ENCODE measurements at regions of chr11 and their contacts with region 1.

Region 1: GRCh38 chr11:26319906-26320305 is 12.0 kb upstream of the ANO3 start:
- ATAC-seq: peak in 7 of 8 experiments; percentile 61 to 95 (median 80)
- H3K4me3 ChIP-seq: no peak overlapping the region
- H3K27ac ChIP-seq: peak overlapping the region in 1 of 2 donors; percentile 6
- H3K4me1 ChIP-seq: peaks cover 6% of the 10 kb centered on the region in 2 donors

Region 2: DNA sequence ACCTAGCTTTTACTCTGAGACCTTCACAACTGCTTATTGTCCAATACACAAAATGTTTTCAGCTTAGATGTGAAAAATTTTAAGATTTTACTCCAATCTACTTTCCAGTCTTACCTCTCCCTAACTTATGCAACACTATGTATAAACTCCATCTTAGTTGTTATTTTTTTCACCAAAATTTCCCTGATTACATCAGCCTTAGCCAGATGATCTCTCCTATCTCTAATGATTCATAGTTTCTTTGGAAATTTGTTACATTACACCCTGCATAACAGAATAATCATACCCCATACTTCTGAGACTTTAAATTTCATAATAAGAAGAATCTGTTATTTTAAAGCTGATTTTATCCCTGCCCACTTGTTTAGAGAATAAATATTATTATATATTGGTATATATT is 608.9 kb before region 1 on chr11:
- in situ Hi-C with region 1: no loop called
- ATAC-seq: no peak
- H3K4me3 ChIP-seq: no peak overlapping the region
- H3K27ac ChIP-seq: no peak overlapping the region
- H3K4me1 ChIP-seq: no peaks in the 10 kb centered on the region

Region 3: DNA sequence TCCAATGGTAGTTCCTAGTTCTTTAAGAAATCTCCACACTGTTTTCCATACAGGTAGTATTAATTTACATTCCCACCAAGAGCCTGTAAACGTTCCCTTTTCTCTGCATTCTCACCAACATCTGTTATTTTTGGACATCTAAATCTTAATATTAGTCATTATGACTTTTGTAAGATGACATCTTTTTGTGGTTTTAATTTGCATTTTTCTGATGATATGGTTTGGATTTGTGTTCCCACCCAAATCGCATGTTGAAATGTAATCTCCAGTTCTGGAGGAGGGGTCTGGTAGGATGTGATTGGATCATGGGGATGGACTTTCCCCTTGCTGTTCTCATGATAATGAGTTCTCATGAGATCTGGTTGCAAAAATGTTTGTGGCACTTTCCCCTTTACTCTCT is 163.2 kb after region 1 on chr11:
- in situ Hi-C with region 1: no loop called
- ATAC-seq: peak in 2 of 8 experiments; percentile 84 to 85
- H3K4me3 ChIP-seq: no peak overlapping the region
- H3K27ac ChIP-seq: no peak overlapping the region
- H3K4me1 ChIP-seq: no peaks in the 10 kb centered on the region

Region 4: DNA sequence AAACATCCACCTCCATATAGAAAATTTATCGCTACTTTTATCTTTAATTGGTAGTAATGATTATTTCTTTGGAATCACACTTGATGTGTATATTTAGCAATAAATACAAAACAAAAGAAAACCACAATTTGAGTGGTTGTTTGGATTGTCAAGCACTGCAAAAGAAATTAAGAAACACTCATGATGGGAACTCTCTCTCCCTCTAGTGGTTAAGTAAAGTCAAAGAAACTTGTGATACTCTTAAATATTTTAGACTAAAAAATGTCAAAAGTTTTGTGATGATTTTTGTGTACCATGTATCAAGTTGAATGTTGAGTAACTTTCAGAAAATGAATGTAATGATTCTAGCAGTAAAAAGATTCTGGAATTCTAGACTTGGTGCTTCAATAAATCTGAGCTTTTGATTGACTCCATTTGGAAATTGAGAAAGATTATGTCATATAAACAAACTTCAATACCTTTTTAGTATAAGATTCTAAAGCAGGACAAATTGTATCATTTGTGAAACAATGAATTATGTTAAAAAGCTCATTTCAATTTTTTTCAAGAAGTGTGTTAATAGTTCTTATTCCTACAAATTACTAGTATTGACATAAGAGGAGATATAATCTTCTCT is 231.4 kb after region 1 on chr11:
- in situ Hi-C with region 1: loop called in 1 of 9 experiments (anchors 10 kb)
- ATAC-seq: peak in 1 of 8 experiments; percentile 23
- H3K4me3 ChIP-seq: no peak overlapping the region
- H3K27ac ChIP-seq: no peak overlapping the region
- H3K4me1 ChIP-seq: no peaks in the 10 kb centered on the region

Region 5: DNA sequence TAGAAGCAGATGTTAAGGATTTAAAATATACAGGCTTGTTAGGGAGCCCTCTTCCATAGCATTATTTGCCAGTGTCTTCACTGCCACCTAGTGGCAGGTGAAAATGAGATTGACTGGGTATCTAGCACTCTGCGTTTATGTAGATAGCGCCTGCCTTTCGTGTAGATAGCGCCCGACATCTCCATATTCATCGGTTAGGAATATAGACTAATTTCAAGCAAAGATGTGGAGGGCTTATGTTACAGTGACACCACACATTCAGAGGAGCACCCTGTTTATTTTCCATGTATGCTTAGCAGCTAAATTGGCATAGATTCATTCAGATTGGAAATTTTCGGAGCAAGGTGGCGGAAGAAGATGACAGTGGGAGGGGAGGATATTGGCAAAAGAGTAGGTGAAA is 330.0 kb after region 1 on chr11:
- in situ Hi-C with region 1: loop called in 1 of 9 experiments (anchors 25 kb)
- ATAC-seq: peak; percentile 72 to 100 (median 86)
- H3K4me3 ChIP-seq: no peak overlapping the region
- H3K27ac ChIP-seq: no peak overlapping the region
- H3K4me1 ChIP-seq: no peaks in the 10 kb centered on the region

Region 6: DNA sequence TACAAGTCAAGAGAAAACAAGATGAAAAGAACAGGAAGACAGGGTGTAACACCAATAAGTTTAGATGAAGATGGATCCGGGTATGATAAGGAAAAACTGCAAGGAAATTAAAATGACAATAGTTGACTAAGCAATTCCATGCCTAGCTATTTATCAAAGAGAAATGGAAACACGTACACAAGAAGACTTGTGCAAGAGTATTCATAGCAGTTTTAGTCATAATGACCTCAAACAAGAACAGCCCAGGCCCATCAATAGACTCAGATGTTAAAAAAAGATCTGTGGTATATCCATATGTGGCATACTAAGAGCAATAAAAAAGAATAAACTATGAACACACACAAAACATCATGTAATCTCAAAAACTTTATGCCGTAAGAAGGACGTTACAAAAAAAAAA is 368.8 kb after region 1 on chr11:
- in situ Hi-C with region 1: no loop called
- ATAC-seq: peak in 2 of 8 experiments; percentile 81 to 82
- H3K4me3 ChIP-seq: no peak overlapping the region
- H3K27ac ChIP-seq: no peak overlapping the region
- H3K4me1 ChIP-seq: no peaks in the 10 kb centered on the region

Measured in motor neuron (in vitro differentiated cells).